ENCODE measurements at regions of chrX and their contacts with region 1.

Region 1: GRCh38 chrX:69285881-69286564 is 120.8 kb upstream of the PJA1 start:
- DNase-seq: peak; percentile 91
- H3K4me3 ChIP-seq: peak overlapping the region; percentile 39
- H3K27ac ChIP-seq: peak overlapping the region; percentile 80
- H3K4me1 ChIP-seq: peaks cover 75% of the 10 kb centered on the region
- H3K27me3 ChIP-seq: no peaks in the 10 kb centered on the region
- CTCF ChIP-seq: peak; percentile 97

Region 2: GRCh38 chrX:68196939-68197791 is 1088.9 kb before region 1 on chrX:
- CTCF ChIA-PET with region 1: no interaction called
- POLR2A ChIA-PET with region 1: no interaction called
- intact Hi-C with region 1: loop called (anchors 10 kb)
- DNase-seq: peak; percentile 64
- H3K4me3 ChIP-seq: no peak overlapping the region
- H3K27ac ChIP-seq: no peak overlapping the region
- H3K4me1 ChIP-seq: no peaks in the 10 kb centered on the region
- H3K27me3 ChIP-seq: no peaks in the 10 kb centered on the region
- CTCF ChIP-seq: peak; percentile 82

Region 3: GRCh38 chrX:68732906-68733493 is 553.0 kb before region 1 on chrX:
- CTCF ChIA-PET with region 1: no interaction called
- POLR2A ChIA-PET with region 1: no interaction called
- intact Hi-C with region 1: loop called (anchors 1 kb)
- DNase-seq: peak; percentile 79
- H3K4me3 ChIP-seq: no peak overlapping the region
- H3K27ac ChIP-seq: no peak overlapping the region
- H3K4me1 ChIP-seq: no peaks in the 10 kb centered on the region
- H3K27me3 ChIP-seq: no peaks in the 10 kb centered on the region
- CTCF ChIP-seq: peak; percentile 79

Region 4: GRCh38 chrX:69093960-69094871 is 191.8 kb before region 1 on chrX:
- CTCF ChIA-PET with region 1: no interaction called
- POLR2A ChIA-PET with region 1: no interaction called
- intact Hi-C with region 1: loop called (anchors 5 kb)
- DNase-seq: peak; percentile 81
- H3K4me3 ChIP-seq: no peak overlapping the region
- H3K27ac ChIP-seq: no peak overlapping the region
- H3K4me1 ChIP-seq: no peaks in the 10 kb centered on the region
- H3K27me3 ChIP-seq: no peaks in the 10 kb centered on the region
- CTCF ChIP-seq: peak; percentile 79

Region 5: DNA sequence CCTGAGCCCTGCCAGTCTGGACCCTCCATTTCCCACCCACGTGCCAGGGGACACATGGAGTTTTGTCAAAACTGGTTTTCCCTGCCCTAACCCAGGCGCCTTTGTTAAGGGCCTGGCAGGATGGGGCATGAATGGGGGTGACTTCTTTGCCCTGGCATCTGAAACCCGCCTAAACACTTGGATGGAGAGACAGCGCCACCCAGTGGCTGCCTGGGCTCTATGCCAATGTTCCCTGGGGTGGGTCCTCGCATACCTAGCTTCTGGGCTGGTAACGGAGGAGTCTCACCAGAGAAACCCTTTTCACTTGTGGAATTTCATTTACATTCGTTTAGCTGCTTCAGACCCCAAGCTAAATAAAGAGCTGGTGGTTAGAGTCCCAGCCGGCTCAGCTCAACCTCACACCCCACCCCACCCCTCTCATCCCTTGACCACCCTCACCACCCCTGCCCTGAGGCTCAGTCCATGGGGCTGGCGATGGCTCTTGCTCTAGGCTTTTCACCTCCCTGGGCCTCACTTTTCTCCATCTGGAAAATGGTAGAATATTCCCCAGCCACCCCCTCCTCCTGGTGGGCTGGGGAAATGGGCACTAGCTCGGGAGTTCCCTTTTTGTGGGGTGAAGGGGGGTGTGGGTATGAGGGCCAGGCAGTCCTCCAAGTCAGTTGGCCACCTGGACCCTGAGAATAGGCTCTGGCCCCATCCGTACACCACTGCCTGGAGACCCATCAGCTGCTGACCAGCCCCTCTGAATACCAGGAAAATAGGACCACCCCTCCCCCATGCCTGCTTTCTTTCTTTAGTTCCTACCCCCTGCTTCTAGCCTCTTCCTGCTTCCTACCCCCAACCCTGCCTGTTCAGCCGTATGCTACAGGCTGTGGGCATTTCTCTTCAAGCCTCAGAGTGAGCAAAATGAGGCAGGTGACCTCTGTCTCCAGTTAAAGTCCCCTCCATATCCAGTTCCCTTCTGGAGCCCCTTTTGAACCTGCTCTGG is 63.6 kb before region 1 on chrX:
- CTCF ChIA-PET with region 1: no interaction called
- POLR2A ChIA-PET with region 1: no interaction called
- intact Hi-C with region 1: loop called (anchors 1 kb)
- DNase-seq: peak; percentile 90
- H3K4me3 ChIP-seq: no peak overlapping the region
- H3K27ac ChIP-seq: peak overlapping the region; percentile 22
- H3K4me1 ChIP-seq: peaks cover 18% of the 10 kb centered on the region
- H3K27me3 ChIP-seq: no peaks in the 10 kb centered on the region
- CTCF ChIP-seq: peak; percentile 87

Measured in A673 (cell line).